Naive thymus-derived CD4-positive, alpha-beta T cell (primary cell): ENCODE measurements at regions of chr17 and their contacts with region 1.

Region 1: DNA sequence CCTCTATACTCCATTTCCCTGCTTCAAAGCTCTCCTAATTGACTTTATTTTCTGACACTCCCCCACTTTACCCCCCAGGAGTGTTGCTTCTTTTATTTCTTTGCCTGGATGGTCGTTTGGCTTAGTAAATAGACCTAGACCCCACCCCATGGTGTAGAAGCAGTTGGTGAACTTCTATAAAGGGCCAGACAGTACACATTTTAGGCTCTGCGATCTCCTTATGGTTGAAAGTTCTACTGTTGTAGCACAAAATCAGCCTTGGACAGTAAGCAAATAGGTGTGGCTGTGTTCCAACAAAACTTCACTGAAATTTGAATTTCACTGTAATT is 31.9 kb downstream of the ZNF287 start:
- DNase-seq: no peak
- ATAC-seq: no peak
- H3K4me3 ChIP-seq: no peak overlapping the region
- H3K4me3 Mint-ChIP-seq: peak overlapping the region; percentile 90 to 98 (median 96)
- H3K27ac ChIP-seq: peak overlapping the region; percentile 53
- H3K27ac Mint-ChIP-seq: peak overlapping the region; percentile 85 to 96 (median 93)
- H3K4me1 ChIP-seq: peaks cover 4 to 5% of the 10 kb centered on the region in 2 donors
- H3K4me1 Mint-ChIP-seq: peaks cover 6 to 23% (median 15%) of the 10 kb centered on the region in 7 donors
- H3K27me3 ChIP-seq: no peaks in the 10 kb centered on the region
- H3K27me3 Mint-ChIP-seq: peaks cover 0 to 4% (median 0%) of the 10 kb centered on the region in 5 donors

Region 2: GRCh38 chr17:16285957-16286640 is 251.0 kb before region 1 on chr17:
- CTCF ChIA-PET with region 1: interaction called, 6 read pairs
- POLR2A ChIA-PET with region 1: interaction called, 8 read pairs
- intact Hi-C with region 1: loop called (anchors 1 to 5 kb)
- DNase-seq: peak; percentile 41 to 76 (median 72)
- ATAC-seq: peak; percentile 95
- H3K4me3 ChIP-seq: peak overlapping the region; percentile 53
- H3K4me3 Mint-ChIP-seq: peak overlapping the region; percentile 71 to 85 (median 80)
- H3K27ac ChIP-seq: peak overlapping the region; percentile 81
- H3K27ac Mint-ChIP-seq: peak overlapping the region; percentile 93 to 99 (median 97)
- H3K4me1 ChIP-seq: peaks cover 36 to 50% of the 10 kb centered on the region in 2 donors
- H3K4me1 Mint-ChIP-seq: peaks cover 41 to 68% (median 62%) of the 10 kb centered on the region in 7 donors
- H3K27me3 ChIP-seq: no peaks in the 10 kb centered on the region
- H3K27me3 Mint-ChIP-seq: no peaks in the 10 kb centered on the region

Region 3: DNA sequence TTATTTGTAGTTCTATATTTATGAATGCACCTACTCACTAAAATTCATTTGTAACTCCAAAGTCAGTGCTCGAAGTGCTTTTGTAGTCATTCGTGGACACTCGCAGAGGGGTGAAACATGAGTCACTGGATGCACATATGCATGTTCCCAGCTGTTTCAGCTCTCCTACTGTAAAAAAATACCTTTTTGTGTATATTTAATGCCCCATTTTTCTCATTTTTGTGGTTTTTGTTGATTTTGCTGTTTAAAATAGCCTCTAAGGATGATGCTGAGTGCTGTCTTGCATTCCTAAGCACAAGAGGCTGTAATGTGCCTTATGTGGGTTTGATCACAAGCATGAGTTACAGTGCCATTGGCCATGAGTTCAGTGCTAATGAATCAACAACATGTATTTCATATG is 214.5 kb before region 1 on chr17:
- CTCF ChIA-PET with region 1: no interaction called
- POLR2A ChIA-PET with region 1: no interaction called
- intact Hi-C with region 1: no loop called
- DNase-seq: no peak
- ATAC-seq: no peak
- H3K4me3 ChIP-seq: no peak overlapping the region
- H3K4me3 Mint-ChIP-seq: no peak overlapping the region
- H3K27ac ChIP-seq: no peak overlapping the region
- H3K27ac Mint-ChIP-seq: no peak overlapping the region
- H3K4me1 ChIP-seq: no peaks in the 10 kb centered on the region
- H3K4me1 Mint-ChIP-seq: no peaks in the 10 kb centered on the region
- H3K27me3 ChIP-seq: no peaks in the 10 kb centered on the region
- H3K27me3 Mint-ChIP-seq: no peaks in the 10 kb centered on the region

Region 4: GRCh38 chr17:16456742-16457316 is 80.3 kb before region 1 on chr17:
- CTCF ChIA-PET with region 1: interaction called, 5 read pairs
- POLR2A ChIA-PET with region 1: no interaction called
- intact Hi-C with region 1: loop called in 1 of 2 experiments (anchors 5 kb)
- DNase-seq: no peak
- ATAC-seq: no peak
- H3K4me3 ChIP-seq: no peak overlapping the region
- H3K4me3 Mint-ChIP-seq: no peak overlapping the region
- H3K27ac ChIP-seq: no peak overlapping the region
- H3K27ac Mint-ChIP-seq: peak overlapping the region in 2 of 9 donors; percentile 23 to 45
- H3K4me1 ChIP-seq: no peaks in the 10 kb centered on the region
- H3K4me1 Mint-ChIP-seq: peaks cover 0 to 14% (median 7%) of the 10 kb centered on the region in 7 donors
- H3K27me3 ChIP-seq: no peaks in the 10 kb centered on the region
- H3K27me3 Mint-ChIP-seq: no peaks in the 10 kb centered on the region

Region 5: GRCh38 chr17:16589097-16589969 is 52.2 kb after region 1 on chr17:
- CTCF ChIA-PET with region 1: interaction called, 28 read pairs
- POLR2A ChIA-PET with region 1: interaction called, 13 read pairs
- intact Hi-C with region 1: loop called (anchors 1 kb)
- DNase-seq: peak; percentile 86 to 96 (median 92)
- ATAC-seq: peak; percentile 99
- H3K4me3 ChIP-seq: peak overlapping the region; percentile 61
- H3K4me3 Mint-ChIP-seq: peak overlapping the region; percentile 70 to 85 (median 77)
- H3K27ac ChIP-seq: peak overlapping the region; percentile 47
- H3K27ac Mint-ChIP-seq: peak overlapping the region in 5 of 9 donors; percentile 7 to 80 (median 73)
- H3K4me1 ChIP-seq: peaks cover 0 to 3% of the 10 kb centered on the region in 2 donors
- H3K4me1 Mint-ChIP-seq: peaks cover 0 to 13% (median 4%) of the 10 kb centered on the region in 7 donors
- H3K27me3 ChIP-seq: no peaks in the 10 kb centered on the region
- H3K27me3 Mint-ChIP-seq: peaks cover 23 to 61% (median 25%) of the 10 kb centered on the region in 5 donors

Region 6: GRCh38 chr17:17041571-17042380 is 504.7 kb after region 1 on chr17:
- CTCF ChIA-PET with region 1: no interaction called
- POLR2A ChIA-PET with region 1: no interaction called
- intact Hi-C with region 1: loop called in 1 of 2 experiments (anchors 1 kb)
- DNase-seq: peak; percentile 88 to 96 (median 95)
- ATAC-seq: peak; percentile 99
- H3K4me3 ChIP-seq: peak overlapping the region; percentile 73
- H3K4me3 Mint-ChIP-seq: peak overlapping the region; percentile 66 to 94 (median 76)
- H3K27ac ChIP-seq: peak overlapping the region; percentile 61
- H3K27ac Mint-ChIP-seq: peak overlapping the region in 2 of 9 donors; percentile 50 to 71
- H3K4me1 ChIP-seq: peaks cover 35% of the 10 kb centered on the region in 2 donors
- H3K4me1 Mint-ChIP-seq: peaks cover 37 to 47% (median 43%) of the 10 kb centered on the region in 7 donors
- H3K27me3 ChIP-seq: no peaks in the 10 kb centered on the region
- H3K27me3 Mint-ChIP-seq: peaks cover 0 to 4% (median 0%) of the 10 kb centered on the region in 5 donors